ENCODE measurements at regions of chr3 and their contacts with region 1.

Region 1: DNA sequence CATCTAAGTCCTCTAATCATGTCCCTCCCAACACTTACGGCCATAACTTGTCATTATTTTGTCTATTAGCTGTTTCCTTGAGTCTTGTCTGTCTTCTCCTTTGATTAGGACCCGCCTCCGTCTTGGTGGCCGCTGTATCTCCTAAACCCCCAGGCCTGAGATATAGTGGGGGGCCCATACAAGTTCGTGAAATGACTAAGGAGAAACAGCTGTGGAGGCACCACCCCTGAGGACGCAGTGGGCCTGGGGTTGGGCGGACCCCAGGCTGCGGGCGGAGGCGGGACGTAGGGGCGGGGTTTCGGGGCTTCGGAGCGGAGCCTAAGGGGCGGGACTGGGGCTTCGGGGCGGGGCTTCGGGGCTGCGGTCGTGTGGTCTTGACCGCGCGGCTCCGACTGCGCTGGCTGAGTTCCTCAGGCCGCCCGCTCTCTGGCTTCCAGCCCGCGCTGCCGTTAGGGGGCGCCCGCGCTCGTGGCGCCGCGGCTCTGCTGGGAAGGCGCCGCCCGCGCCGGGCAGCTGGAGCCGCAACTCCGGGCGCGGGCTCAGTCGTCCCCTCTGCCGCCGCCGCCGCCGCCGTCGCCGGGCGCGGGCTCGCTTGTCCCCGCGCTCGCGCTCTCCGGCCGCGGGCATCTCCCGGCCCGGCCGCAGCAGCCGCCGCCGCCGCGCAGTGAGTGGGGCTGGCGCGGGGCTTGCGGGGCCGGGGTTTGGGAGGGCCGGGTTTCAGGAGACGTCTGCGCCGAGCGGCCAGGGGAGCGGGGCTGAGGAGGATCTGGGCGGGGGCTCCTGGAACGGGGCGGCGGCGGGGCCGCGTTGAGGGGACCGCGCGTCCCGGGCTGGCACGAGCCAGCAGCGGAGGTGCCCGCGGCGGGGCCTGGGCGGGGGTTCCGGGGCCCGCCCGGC is at the start of gene KCTD6:
- H3K4me3 ChIP-seq: peak within 1 kb of the TSS; percentile 64
- H3K27ac ChIP-seq: peak within 1 kb of the TSS; percentile 77
- H3K4me1 ChIP-seq: peaks cover 8% of the 10 kb centered on the region; the same call in 1 of the 2 replicates
- CTCF ChIP-seq: no peak; the same call in 1 of the 2 replicates

Region 2: DNA sequence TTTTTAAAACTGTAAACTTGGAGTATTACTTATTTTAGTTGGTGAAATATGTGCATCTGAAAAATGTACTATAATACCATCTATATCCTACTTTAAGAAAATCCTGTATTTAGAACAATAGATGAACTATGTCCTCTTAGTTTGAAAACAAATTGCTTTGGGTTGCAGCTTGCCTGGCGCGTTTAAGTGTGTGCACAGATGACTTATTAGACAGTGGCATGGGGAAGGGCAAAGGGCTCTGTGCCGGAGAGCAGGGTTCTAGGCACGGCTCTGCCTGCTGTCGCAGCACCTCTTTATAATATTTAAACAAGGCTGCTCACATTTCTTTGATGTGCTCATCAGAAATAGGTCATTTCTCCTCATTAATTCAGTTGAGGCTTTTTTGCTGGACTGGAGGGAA is 149.1 kb before region 1 on chr3:
- CTCF ChIA-PET with region 1: no interaction called
- POLR2A ChIA-PET with region 1: no interaction called
- H3K4me3 ChIP-seq: no peak overlapping the region
- H3K27ac ChIP-seq: no peak overlapping the region
- H3K4me1 ChIP-seq: no peaks in the 10 kb centered on the region
- CTCF ChIP-seq: no peak

Region 3: DNA sequence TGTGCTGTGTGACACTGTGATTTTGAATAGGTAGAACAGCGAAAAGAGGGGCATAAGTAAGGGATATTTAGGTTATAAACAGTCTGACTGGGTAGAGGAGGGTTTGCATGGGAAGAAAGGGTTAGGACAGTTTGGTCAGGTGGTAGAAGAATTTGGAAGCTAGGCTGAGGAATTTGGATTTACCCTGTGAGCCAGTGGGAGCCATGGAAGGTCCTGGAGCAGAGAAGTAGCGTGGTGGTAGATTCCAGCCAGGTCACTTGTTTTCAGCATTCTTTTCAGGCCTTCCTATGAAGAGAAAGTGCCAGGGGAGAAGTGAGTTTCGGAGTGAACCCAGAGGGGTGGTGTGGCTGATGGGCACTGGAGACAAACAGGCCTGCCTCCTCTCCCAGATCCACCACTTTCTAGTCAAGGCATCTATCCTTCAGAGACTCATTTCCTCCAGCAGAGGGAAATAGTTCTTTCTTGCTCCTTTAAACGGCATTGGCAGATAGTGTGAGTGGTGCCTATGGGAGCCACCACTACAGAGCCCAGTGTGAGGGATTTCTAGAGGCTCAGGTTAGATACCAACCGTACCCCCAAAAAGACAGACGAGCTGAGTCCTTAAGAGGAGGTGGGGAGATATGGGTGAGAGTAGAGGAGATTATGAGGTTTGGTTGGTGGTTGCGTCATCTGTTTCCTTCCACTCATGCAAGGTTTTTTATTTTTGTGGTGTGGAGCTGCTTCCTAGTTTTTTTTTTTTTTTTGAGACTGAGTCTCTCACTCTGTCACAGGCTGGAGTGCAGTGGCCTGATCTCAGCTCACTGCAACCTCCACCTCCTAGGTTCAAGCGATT is 137.8 kb before region 1 on chr3:
- CTCF ChIA-PET with region 1: no interaction called
- POLR2A ChIA-PET with region 1: no interaction called
- H3K4me3 ChIP-seq: no peak overlapping the region
- H3K27ac ChIP-seq: no peak overlapping the region
- H3K4me1 ChIP-seq: 0 out of 2 replicates have a peak, but pooled peaks cover 4% of the 10 kb centered on the region
- CTCF ChIP-seq: no peak

Region 4: DNA sequence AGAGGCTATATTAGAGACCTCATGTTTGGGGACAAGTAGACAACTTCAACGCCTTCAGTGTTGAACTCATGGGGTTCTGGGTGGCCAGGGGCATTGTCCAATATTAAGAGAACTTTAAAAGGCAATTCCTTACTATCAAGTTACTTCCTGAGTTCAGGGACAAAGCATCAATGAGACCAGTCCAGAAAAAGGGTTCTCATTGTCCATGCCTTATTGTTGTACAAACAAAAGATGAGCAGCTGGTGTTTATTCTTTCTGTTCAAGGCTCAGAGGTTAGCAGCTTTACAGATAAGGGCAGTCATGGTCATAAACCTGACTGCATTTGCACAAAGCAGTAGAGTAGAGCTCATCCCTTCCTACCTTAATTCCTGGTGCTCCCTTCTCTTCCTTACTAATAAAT is 39.6 kb before region 1 on chr3:
- CTCF ChIA-PET with region 1: no interaction called
- POLR2A ChIA-PET with region 1: no interaction called
- H3K4me3 ChIP-seq: no peak overlapping the region
- H3K27ac ChIP-seq: no peak overlapping the region
- H3K4me1 ChIP-seq: no peaks in the 10 kb centered on the region
- CTCF ChIP-seq: no peak

Region 5: DNA sequence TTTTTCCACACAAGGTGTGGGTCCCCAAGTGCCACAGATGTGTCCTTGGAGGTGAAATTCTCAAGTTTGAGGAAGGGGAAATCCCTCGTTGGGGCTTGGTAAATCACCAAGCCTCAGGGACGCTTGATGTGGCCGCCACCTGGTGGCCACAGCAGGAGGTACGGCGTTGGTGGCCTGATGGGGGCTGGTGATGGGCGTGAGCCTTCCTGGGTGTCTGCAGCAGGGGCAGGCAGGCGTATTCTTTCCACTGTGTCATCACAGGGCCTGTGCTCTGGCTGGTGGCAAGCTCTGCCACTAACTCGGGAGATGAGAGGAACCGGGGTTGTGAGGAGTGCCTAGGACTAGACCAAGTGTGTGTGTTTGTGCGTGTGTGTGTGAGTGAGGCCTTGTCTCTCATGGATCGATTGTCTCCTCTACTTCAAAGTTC is 41.1 kb after region 1 on chr3:
- CTCF ChIA-PET with region 1: interaction called, 12 read pairs
- POLR2A ChIA-PET with region 1: interaction called, 3 read pairs
- H3K4me3 ChIP-seq: no peak overlapping the region
- H3K27ac ChIP-seq: no peak overlapping the region
- H3K4me1 ChIP-seq: no peaks in the 10 kb centered on the region
- CTCF ChIP-seq: peak; percentile 74

Region 6: DNA sequence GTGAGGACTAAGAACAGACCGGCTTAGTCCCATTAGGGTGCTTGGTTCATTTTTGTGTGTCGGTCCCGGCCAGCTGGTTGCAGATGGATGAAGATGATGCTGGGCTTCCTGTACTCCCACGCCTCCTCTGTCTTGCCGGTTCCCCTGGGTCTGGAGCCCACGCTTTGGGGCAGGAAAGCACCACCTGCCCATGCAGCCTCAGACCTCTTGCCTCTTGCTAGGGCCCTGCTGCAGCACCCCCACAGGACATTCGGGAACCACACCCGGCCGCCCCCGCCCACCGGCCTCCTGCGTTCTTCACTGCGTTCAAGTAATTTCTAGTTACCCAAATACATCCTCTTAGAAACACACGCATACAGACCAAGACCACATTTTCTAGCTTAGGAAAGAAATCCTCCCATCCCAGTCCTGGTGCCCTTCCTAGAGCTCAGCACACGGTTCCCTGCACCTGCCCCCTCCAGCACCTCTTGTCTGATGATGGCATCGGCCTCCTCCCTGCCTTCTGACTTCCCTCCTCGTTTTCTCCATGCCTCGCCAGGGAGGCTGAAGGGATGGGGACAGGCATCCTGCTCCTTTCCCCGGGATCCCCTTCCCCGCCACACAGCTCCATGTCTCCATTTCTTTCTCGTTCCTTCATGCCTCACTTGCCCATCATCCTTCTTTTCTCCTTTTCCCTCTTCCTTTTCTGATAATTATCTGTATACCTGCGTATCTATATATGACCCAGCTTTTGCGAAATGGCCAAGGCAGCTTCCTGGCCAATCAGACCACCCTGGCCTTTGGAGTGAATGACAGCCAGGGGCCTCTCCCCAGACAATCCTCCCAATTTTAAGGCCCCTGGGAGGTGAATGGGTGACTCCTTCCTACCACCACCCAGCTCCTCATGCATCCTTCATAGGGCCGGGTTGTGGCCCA is 143.9 kb after region 1 on chr3:
- CTCF ChIA-PET with region 1: no interaction called
- POLR2A ChIA-PET with region 1: no interaction called
- H3K4me3 ChIP-seq: no peak overlapping the region
- H3K27ac ChIP-seq: no peak overlapping the region
- H3K4me1 ChIP-seq: no peaks in the 10 kb centered on the region
- CTCF ChIP-seq: no peak

Measured in HEK293 (cell line).